Posterior cingulate gyrus (tissue), 11 donors: ENCODE measurements at regions of chr9 and their contacts with region 1.

Region 1: GRCh38 chr9:127586537-127586936 is 25.5 kb upstream of the STXBP1 start:
- DNase-seq: peak in 9 of 10 donors; percentile 56 to 95 (median 80)

Region 2: GRCh38 chr9:127503947-127504782 is 82.4 kb before region 1 on chr9:
- intact Hi-C with region 1: loop called (anchors 1 kb)
- DNase-seq: peak; percentile 63 to 96 (median 82)

Region 3: DNA sequence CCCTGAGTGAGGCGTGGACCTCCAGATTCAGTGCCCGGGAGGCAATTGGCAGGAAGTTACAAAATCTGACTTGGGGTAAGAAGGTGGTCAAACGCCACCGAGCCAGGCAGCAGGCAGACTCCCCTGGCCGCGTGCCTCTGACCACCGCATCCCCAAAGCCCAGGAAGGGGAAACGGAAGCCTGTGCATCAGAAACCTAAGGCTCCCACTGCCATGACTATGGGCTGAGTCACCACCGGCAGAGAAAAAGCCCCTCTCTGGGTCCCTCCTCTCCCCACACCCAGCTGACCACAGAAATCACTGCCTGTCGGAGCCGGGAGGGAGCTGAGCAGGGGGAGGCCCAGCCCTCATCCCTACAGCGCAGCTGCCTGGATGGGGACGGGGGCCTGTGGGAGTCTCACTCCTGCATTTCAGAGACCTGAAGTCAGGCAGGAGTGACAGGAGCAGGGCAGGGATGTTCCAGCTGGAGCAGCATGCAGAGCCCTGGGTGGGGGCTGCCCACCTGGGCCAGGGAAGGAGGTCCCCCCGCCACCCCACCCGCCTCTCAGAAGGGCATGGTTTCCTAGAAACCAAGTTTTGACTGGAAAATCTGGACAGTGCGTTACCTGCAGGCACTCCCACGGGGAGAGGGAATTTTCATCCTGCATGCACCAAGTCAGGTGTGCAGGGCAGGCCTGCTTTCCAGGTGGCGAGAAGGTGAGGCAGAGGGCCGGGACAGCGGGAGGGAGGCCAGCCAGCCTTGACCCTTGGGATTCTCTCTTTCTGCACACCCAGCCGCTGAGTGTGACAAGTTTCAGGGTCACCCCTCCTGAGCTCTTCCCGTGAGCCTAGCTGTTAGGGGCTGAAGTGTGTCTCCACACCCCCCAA is 67.0 kb before region 1 on chr9:
- intact Hi-C with region 1: no loop called
- DNase-seq: peak in 2 of 10 donors; percentile 24 to 86

Region 4: DNA sequence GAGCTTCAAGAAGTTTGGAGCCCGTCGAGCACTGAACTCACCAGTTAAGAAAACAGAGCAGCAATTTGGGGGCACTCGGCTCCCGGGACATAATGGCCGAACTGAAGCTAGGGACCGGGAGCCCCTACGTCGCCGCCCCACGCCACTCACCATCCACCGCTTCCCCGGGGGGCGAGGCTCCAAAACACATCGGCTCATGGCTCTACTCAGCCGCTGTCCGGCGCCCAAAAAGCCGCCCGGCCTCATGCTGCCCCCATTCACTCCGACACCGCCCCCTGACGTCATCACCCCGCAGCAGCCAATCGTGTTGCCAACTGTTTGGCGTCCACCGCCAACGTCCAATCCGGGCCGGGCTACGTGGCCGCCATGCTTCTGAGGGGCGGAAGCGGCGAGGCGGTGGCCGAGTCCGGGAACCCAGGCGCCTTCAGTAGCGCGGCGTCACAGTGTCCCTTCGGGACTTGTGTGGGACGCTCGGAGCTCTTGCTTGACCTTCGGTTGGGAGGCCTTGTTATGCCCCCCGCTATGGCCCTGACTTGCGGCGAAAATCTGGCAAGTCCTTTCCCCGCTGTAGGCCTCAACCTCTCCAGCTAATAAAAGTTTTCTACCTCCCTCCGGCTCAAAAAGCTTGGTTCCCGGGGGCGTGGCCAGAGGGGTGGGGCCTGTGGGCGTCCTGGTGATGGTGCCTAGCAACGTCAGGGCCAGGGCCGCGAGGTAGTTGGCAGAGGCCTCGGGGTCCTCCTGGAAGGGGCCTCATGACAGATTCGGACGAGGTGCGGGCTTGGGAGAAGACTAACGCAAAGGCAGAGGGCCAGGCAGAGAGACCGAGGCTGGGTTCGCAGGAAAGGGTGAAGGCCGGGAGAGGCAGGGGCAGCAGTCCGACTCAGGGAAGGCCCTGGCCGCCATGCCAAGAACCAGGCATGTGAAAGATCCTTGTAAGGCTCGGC is 129.1 kb after region 1 on chr9 and contains the starts of genes PTRH1 and TTC16:
- intact Hi-C with region 1: loop called (anchors 5 kb)
- DNase-seq: peak; percentile 97 to 100 (median 99)